G401 (cell line): ENCODE measurements at regions of chr2 and their contacts with region 1.

Region 1: DNA sequence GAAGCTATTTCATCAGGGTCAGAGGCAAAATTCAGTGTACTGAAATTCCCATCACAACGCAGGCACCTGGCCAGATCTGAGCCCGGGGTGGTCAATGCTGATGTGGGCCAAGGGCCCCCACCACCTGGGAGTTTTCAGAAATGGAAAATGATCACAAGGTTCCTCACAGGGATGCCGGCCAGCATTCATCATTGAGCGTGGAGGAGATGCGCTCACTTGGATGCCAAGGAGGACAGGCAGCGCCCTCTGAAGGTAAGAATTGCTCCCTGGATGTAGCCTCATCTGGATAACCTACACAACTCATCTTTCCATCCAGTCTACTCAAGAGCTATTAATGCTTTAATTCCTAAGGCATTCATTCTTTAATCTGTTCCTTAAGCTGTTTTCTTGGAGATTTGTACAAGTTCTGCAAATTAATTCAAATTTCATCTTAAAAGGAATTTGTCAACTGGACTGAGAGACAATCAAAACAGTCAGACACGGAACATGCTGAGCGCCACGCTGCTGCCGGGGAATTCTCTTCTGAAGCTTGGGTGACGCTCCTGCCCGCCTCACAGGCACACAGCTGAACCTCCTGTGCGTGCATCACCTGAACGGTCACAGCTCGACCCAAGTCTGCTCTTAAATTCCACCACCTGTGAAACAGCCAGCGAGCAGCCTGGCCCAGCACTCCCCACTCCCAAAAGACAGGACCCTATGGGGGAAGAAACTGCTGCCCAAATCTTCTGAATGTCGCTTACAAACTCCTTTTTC is 206.7 kb downstream of the HDAC4 start:
- DNase-seq: peak; percentile 43

Region 2: DNA sequence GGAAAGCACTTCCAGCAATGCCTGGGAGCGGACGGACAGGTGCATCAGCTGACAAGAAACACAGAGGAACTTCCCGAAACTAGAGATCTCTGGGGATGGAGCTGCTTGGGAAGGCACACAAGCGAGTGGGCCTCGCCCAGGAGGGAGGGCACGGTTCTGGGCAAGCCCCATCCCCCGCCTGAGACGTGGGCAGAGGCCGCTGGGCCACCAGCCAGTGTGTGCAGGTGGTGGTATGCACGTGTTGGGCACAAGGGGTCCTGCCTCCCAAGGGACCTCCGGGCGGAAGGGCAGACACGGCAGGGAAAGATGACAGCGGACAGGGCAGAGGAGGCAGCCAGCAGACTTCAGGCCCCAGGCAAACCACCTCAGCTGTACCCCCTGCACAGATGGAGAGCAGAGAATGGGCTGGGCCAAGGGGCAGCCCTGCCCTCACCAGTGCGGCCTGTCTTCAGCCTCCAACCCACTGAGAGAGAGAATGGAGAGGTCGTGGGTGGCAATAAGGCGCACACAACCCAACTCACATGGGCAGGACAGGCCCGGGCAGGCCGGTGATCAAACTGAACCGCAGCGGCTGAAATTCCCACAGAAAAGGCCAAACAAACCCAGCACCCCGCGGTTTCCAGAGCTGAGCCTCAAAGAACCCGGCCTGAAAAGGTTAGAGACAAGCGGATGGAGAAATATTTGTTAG is 155.5 kb after region 1 on chr2:
- in situ Hi-C with region 1: loop called (anchors 5 kb)
- DNase-seq: no peak

Region 3: DNA sequence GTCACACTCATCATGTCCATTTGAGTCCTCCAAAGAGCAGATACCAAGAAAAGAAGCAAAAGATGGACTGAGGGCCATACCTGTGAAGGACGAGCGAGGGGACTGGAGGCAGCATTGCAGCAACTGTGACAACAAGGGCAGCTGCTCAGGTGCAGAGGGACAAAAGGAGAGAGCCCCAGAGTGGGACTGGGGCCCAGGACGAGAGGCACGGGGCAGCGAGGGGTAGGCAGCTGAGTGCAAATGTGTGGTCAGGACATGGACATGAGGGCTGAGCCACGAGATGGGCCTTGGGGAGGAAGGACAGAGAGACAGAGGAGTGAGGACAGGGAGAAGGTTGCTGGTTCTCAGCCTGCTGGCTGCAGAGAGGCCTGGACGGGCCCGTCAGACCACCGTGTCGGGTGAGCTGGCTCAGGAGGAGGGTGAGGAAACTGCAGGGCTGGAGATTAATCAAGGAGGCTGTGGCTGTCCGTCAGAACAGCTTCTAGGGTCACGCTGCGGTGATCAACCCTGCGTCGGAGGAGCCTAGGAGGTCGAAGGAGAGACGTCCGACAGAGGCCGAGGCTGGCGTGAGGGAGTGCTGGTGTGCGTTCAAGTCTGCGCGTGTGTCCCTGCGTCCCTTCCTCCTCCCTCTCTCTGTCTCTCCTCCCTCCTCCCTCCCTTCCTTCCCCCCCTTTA is 413.6 kb after region 1 on chr2:
- in situ Hi-C with region 1: no loop called
- DNase-seq: no peak